ENCODE measurements at regions of chr4 and their contacts with region 1.

Region 1: DNA sequence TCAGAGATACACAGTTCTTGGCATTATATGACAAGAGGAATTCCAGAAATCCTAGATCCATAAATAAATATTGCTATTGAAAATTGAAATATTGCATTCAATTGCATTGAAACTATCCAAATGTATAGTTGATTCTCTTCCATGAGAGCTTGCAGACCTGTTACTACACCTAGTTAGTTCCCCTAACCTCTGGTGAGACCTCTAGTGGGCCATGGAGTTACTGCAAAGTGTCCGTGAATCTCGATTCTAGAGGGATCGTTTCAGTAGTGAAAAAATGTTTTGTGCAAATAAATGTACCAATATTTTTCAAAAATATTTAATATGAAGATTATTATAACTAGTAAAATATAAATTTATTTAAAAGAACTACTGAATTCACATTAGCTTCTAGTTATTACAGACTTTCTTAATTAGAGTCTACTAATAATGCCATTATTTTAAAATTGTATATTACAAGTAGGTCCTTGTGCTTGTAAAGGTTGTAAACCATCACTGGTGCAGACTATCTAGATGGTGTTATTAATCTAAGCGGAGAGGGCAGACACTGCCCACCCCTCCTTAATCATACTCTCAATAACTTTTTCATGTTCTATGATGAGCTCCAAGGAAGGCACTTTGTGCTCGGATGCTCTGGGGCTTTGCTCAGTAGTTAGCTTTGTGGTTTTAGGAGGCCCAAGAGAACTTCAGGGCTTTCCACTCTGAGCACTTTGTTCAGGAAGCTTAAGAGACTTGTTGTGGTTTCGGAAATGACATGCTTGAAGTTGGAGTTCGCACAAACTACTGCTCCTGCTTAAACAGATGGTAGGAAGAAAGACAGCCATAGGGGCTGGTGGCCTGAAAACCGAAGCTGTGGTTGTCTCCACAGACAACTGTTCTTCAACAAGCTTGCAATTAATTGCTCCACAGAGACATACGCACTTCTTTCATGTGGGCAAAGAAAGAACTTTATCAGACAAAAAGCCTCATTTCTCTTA is 42.8 kb downstream of the IL21 start:
- DNase-seq: no peak
- H3K4me3 ChIP-seq: no peak overlapping the region
- H3K27me3 ChIP-seq: no peaks in the 10 kb centered on the region
- CTCF ChIP-seq: peak; percentile 81

Region 2: GRCh38 chr4:121900132-121900983 is 677.7 kb before region 1 on chr4:
- CTCF ChIA-PET with region 1: interaction called, 32 read pairs
- POLR2A ChIA-PET with region 1: no interaction called
- DNase-seq: peak; percentile 10
- H3K4me3 ChIP-seq: no peak overlapping the region
- H3K27me3 ChIP-seq: no peaks in the 10 kb centered on the region
- CTCF ChIP-seq: peak; percentile 78

Region 3: DNA sequence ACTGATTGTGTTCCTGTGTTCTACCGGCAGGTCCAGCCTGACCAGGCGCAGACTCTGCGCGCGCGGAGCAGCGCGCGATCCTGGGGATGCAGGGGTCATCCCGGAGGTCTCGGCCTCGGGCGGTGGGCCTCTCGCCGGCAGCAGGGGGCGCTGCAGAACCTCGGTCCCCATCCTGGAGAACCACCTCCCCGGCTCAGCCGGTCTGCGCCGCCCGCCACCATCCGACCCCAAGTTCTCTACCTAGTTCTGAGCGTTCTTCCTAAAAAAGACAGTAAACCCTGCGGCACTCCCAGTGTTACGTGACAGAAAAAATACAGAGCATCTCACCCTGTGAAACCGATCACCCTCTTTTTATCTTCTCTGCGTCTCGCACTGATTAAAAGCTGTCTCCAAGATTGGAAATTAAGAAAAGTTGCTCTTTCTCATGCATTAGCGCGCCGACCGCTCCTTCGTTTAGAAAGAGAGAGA is 627.8 kb before region 1 on chr4:
- CTCF ChIA-PET with region 1: interaction called, 18 read pairs
- POLR2A ChIA-PET with region 1: no interaction called
- DNase-seq: peak; percentile 19
- H3K4me3 ChIP-seq: peak overlapping the region; percentile 59
- H3K27me3 ChIP-seq: no peaks in the 10 kb centered on the region
- CTCF ChIP-seq: peak; percentile 91

Region 4: GRCh38 chr4:122300776-122301175 is 277.3 kb before region 1 on chr4:
- CTCF ChIA-PET with region 1: interaction called, 11 read pairs
- POLR2A ChIA-PET with region 1: no interaction called
- DNase-seq: no peak
- H3K4me3 ChIP-seq: no peak overlapping the region
- H3K27me3 ChIP-seq: no peaks in the 10 kb centered on the region
- CTCF ChIP-seq: peak; percentile 28; the same call in 1 of the 2 replicates

Region 5: GRCh38 chr4:122309988-122310626 is 268.0 kb before region 1 on chr4:
- CTCF ChIA-PET with region 1: interaction called, 14 read pairs
- POLR2A ChIA-PET with region 1: no interaction called
- DNase-seq: no peak
- H3K4me3 ChIP-seq: no peak overlapping the region
- H3K27me3 ChIP-seq: no peaks in the 10 kb centered on the region
- CTCF ChIP-seq: peak; percentile 47

Region 6: GRCh38 chr4:122458625-122459024 is 119.5 kb before region 1 on chr4:
- CTCF ChIA-PET with region 1: no interaction called
- POLR2A ChIA-PET with region 1: no interaction called
- DNase-seq: no peak
- H3K4me3 ChIP-seq: no peak overlapping the region
- H3K27me3 ChIP-seq: no peaks in the 10 kb centered on the region
- CTCF ChIP-seq: no peak

Region 7: DNA sequence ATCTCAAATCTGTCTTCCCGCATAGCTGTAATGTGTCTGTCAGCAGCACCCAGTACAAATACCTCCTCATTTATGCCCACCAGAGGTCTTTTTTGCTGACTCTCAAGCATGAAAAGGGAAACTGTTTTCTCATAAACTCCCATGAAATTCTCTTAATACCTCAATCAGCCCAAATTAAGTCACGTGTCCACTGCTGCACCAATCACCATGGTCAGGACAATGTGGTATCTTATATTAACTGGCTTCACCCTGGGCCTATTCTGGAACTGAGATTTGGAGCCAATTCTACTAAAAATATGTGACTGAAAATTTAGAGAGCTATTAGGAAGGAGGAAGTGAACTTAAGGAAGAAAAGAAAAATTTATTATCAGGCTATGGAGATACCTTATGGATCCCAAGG is 15.6 kb before region 1 on chr4:
- CTCF ChIA-PET with region 1: interaction called, 13 read pairs
- POLR2A ChIA-PET with region 1: no interaction called
- DNase-seq: no peak
- H3K4me3 ChIP-seq: no peak overlapping the region
- H3K27me3 ChIP-seq: no peaks in the 10 kb centered on the region
- CTCF ChIP-seq: no peak

Measured in BJ (cell line).